ENCODE measurements at regions of chr19 and their contacts with region 1.

Region 1: DNA sequence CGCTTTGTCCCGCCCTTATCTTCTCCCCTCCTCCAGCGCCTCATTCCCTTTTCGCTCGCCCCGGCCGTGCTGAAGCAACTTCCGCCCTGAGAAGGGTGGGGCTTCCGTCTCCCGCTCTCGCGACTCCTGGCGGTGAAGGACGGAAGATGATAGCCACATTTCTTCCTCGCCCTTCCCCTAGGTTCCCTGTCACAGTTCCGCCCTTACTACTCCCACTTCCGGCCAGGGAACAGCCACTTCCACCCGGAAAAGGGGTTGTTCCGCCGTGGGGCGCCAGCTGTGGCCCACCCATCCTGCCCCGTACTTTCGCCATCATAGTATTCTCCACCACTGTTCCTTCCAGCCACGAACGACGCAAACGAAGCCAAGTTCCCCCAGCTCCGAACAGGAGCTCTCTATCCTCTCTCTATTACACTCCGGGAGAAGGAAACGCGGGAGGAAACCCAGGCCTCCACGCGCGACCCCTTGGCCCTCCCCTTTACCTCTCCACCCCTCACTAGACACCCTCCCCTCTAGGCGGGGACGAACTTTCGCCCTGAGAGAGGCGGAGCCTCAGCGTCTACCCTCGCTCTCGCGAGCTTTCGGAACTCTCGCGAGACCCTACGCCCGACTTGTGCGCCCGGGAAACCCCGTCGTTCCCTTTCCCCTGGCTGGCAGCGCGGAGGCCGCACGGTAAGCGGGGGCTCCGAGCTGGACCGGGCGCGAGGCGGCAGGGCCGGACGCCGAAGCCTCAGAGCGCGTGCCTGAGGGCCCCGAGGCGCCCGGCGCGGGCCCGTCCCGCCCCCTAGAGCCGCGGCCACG is at the start of gene RPS19:
- DNase-seq: peak; percentile 97

Region 2: DNA sequence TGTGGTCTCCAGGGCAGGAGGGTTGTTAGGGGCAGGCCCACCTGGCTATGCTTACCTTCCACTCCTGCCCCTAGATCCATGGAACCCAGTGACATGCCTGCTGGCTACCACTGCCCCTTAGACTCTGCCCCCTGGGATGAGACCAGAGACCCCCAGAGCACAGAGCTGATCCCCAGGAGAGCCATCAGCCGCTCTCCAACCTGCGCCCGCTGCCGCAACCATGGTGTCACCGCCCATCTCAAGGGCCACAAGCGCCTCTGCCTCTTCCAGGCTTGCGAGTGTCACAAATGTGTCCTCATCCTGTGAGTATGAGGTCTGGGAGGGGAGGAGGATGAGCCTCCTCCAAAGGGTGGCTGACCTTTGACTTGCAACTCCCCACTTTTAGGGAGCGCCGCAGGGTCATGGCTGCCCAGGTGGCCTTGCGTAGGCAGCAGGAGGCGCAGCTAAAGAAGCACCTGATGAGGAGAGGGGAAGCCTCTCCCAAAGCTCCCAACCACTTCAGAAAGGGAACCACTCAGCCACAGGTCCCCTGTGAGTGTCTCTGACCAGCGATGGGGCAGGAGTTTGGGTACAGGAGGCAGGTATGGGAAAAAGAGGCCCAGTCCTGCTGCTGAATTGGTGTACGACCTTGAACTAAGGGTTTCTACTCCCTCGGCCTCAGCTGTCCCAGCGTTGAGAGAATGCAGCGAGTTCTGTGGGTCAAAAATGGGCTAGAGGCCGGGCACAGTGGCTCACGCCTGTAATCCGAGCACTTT is 12.3 kb before region 1 on chr19:
- CTCF ChIA-PET with region 1: interaction called, 3 read pairs
- POLR2A ChIA-PET with region 1: interaction called, 31 read pairs
- DNase-seq: no peak

Region 3: GRCh38 chr19:41872775-41873647 is 13.2 kb after region 1 on chr19:
- CTCF ChIA-PET with region 1: interaction called, 6 read pairs
- POLR2A ChIA-PET with region 1: interaction called, 43 read pairs
- DNase-seq: peak; percentile 69

Region 4: GRCh38 chr19:41883821-41884733 is 24.3 kb after region 1 on chr19:
- CTCF ChIA-PET with region 1: no interaction called
- POLR2A ChIA-PET with region 1: interaction called, 17 read pairs
- DNase-seq: peak; percentile 98

Region 5: GRCh38 chr19:41930926-41931592 is 71.2 kb after region 1 on chr19:
- CTCF ChIA-PET with region 1: no interaction called
- POLR2A ChIA-PET with region 1: interaction called, 11 read pairs
- DNase-seq: peak; percentile 50

Region 6: DNA sequence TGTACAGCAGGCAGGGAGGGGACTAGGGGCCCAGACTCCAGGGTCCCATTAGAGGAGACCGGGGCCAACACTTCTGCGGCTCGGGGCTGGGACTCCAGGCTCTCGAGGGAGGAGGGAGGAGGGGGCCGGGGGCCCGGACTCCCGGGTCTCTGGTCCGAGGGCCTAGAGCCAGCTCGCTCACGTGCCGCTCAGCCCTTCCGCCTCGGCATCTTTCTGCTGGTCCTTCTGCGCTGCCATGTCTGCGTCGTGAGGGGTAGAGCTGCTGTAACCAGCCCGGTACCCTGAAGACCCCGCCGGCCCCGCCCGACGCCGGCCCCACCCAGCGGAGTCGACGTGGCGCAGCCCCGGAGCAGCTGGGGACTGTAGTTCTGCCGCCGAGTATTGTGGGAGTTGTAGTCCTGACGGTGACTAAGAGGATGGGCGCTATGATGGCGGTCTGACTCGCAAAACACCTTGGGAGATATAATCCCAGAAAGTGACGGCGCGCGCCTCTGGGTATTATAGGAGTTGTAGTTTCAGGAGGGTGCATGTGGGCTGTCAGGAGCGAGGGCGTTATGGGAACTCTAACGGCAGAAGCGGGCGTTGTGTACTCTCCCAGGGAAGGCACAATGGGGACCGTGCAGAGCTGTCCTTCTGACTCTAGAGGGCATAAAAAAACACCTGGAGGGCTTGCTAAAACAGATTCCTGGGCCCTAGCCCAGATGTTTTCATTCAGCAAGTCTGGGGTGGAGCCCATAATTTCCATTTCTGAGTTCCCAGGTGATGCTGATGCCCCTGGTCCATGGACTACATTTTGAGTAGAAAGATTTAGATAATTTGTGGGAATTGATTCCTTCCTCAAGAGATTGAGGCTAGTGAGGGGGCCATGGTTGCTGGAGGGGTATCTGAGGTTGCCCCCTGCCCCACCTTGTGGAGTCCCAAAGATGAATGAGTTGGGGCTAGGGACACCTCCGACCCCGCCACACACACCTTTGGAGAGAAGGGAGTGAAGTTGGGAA is 99.5 kb after region 1 on chr19 and contains the start of gene RABAC1:
- CTCF ChIA-PET with region 1: no interaction called
- POLR2A ChIA-PET with region 1: interaction called, 13 read pairs
- DNase-seq: peak; percentile 91

Region 7: DNA sequence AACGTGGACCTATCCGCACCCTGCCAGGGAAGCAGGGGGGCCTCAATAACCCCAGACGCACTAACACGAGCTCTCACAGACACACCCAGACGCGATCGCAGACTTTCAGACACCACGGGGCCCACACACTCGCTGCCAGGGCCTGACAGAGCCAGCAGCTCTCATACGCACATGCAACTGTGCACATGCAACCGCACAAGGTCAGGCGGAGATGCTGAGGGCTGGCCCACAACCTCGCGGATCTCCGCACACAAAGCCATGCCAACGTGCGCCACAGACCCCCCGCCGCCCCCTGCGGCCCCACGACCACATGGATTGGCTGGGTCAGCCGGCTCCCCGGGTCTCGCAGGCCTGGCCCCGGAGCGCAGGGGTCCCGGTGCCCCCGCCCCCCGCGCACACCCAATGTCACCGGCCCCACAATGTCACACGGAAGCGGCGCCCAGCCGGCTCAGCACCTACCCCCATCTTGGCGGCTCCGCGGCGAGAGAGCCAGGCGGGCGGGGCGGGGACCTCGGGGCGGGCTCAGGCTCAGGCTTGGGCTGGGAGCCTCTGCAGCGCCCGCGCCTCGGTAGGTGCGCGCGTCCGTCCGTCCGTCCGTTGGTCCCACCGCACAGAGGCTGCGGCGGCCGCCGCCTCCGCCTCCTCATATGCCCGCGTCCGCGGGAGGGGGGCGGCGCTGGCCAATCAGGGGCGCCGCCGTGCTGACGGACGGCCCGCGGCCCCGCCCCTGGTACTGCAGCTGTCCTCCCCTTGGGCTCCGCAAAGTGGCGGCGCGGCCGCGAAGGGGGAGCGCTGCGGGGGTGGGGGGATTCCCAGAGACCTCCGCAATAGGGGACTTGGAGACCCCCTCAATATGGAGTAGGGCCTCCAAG is 134.0 kb after region 1 on chr19 and contains the start of gene ATP1A3:
- CTCF ChIA-PET with region 1: no interaction called
- POLR2A ChIA-PET with region 1: no interaction called
- DNase-seq: peak; percentile 86

Measured in HEK293T (cell line).